CD8-positive, alpha-beta T cell (primary cell): ENCODE measurements at regions of chr2 and their contacts with region 1.

Region 1: GRCh38 chr2:219947575-219947974 is 320.1 kb downstream of the SLC4A3 start:
- DNase-seq: no peak
- ATAC-seq: no peak
- H3K4me3 ChIP-seq: no peak overlapping the region
- H3K4me3 Mint-ChIP-seq: no peak overlapping the region
- H3K27ac ChIP-seq: no peak overlapping the region
- H3K27ac Mint-ChIP-seq: no peak overlapping the region
- H3K4me1 ChIP-seq: no peaks in the 10 kb centered on the region
- H3K4me1 Mint-ChIP-seq: no peaks in the 10 kb centered on the region
- H3K27me3 ChIP-seq: no peaks in the 10 kb centered on the region
- H3K27me3 Mint-ChIP-seq: peaks cover 7% of the 10 kb centered on the region
- CTCF ChIP-seq: no peak

Region 2: GRCh38 chr2:220552790-220553535 is 605.4 kb after region 1 on chr2:
- CTCF ChIA-PET with region 1: no interaction called
- POLR2A ChIA-PET with region 1: no interaction called
- intact Hi-C with region 1: loop called in 1 of 2 experiments (anchors 5 kb)
- DNase-seq: no peak
- ATAC-seq: no peak
- H3K4me3 ChIP-seq: no peak overlapping the region
- H3K4me3 Mint-ChIP-seq: no peak overlapping the region
- H3K27ac ChIP-seq: no peak overlapping the region
- H3K27ac Mint-ChIP-seq: no peak overlapping the region
- H3K4me1 ChIP-seq: no peaks in the 10 kb centered on the region
- H3K4me1 Mint-ChIP-seq: no peaks in the 10 kb centered on the region
- H3K27me3 ChIP-seq: no peaks in the 10 kb centered on the region
- H3K27me3 Mint-ChIP-seq: no peaks in the 10 kb centered on the region
- CTCF ChIP-seq: no peak